Activated naive CD4-positive, alpha-beta T cell treated with anti-CD3 and anti-CD28 coated beads, Interleukin-2, amount 10 ng/mL, durations not matched to agents 7 days and 5 days (primary cell): ENCODE measurements at regions of chr6 and their contacts with region 1.

Region 1: GRCh38 chr6:31546962-31547726 is at the start of gene NFKBIL1:
- DNase-seq: peak; percentile 95
- H3K4me3 Mint-ChIP-seq: peak within 1 kb of the TSS; percentile 80
- H3K27ac Mint-ChIP-seq: peak within 1 kb of the TSS; percentile 90
- H3K4me1 Mint-ChIP-seq: peaks cover 72% of the 10 kb centered on the region
- H3K27me3 Mint-ChIP-seq: no peaks in the 10 kb centered on the region

Region 2: GRCh38 chr6:31568537-31568961 is 21.4 kb after region 1 on chr6:
- CTCF ChIA-PET with region 1: interaction called, 1,087 read pairs
- DNase-seq: peak; percentile 84
- H3K4me3 Mint-ChIP-seq: peak overlapping the region; percentile 27
- H3K27ac Mint-ChIP-seq: peak overlapping the region; percentile 85
- H3K4me1 Mint-ChIP-seq: peaks cover 73% of the 10 kb centered on the region
- H3K27me3 Mint-ChIP-seq: peaks cover 33% of the 10 kb centered on the region

Region 3: GRCh38 chr6:31580807-31581433 is 33.8 kb after region 1 on chr6:
- CTCF ChIA-PET with region 1: interaction called, 1,087 read pairs
- DNase-seq: peak; percentile 90
- H3K4me3 Mint-ChIP-seq: peak overlapping the region; percentile 93
- H3K27ac Mint-ChIP-seq: peak overlapping the region; percentile 97
- H3K4me1 Mint-ChIP-seq: peaks cover 70% of the 10 kb centered on the region
- H3K27me3 Mint-ChIP-seq: no peaks in the 10 kb centered on the region